CD4-positive, alpha-beta memory T cell (primary cell): ENCODE measurements at regions of chr3 and their contacts with region 1.

Region 1: GRCh38 chr3:33773637-33774036 is 24.8 kb upstream of the PDCD6IP start:
- DNase-seq: no peak
- H3K4me3 ChIP-seq: no peak overlapping the region
- H3K4me3 Mint-ChIP-seq: no peak overlapping the region
- H3K27ac ChIP-seq: no peak overlapping the region
- H3K27ac Mint-ChIP-seq: no peak overlapping the region
- H3K4me1 ChIP-seq: no peaks in the 10 kb centered on the region
- H3K4me1 Mint-ChIP-seq: no peaks in the 10 kb centered on the region
- H3K27me3 ChIP-seq: no peaks in the 10 kb centered on the region
- H3K27me3 Mint-ChIP-seq: peaks cover 0 to 1% of the 10 kb centered on the region in 2 donors

Region 2: DNA sequence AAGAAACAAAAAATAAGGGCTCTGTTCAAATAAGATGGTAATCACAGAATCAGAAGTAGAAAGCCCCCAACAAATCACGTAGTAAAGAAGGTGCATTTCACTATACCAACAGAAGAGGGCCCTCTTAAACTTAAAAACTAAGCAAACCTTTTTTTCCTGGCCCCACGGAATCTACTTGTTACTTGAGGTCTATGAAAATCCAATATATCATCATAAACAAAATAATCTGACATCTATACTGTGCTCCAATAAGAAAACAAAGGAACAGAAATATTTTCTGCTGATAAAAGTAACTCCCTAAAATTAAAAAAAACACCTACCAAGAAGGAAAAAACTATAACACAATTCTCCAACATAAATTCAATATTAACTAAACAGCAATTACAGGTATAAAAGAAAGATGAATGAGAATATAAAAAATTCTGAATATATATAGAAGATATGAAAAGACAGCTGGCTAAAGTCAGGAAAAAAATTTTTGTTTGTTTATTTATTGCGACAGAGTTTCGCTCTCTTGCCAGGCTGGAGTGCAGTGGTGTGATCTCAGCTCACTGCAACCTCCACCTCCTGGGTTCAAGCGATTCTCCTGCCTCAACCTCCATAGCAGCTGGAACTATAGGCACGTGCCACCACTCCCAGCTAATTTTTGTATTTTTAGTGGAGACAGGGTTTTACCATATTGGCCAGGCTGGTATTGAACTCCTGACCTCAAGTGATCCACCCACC is 137.3 kb before region 1 on chr3:
- CTCF ChIA-PET with region 1: interaction called, 6 read pairs
- POLR2A ChIA-PET with region 1: no interaction called
- intact Hi-C with region 1: loop called (anchors 1 kb)
- DNase-seq: peak; percentile 9 to 31 (median 22)
- H3K4me3 ChIP-seq: no peak overlapping the region
- H3K4me3 Mint-ChIP-seq: no peak overlapping the region
- H3K27ac ChIP-seq: no peak overlapping the region
- H3K27ac Mint-ChIP-seq: no peak overlapping the region
- H3K4me1 ChIP-seq: no peaks in the 10 kb centered on the region
- H3K4me1 Mint-ChIP-seq: no peaks in the 10 kb centered on the region
- H3K27me3 ChIP-seq: no peaks in the 10 kb centered on the region
- H3K27me3 Mint-ChIP-seq: no peaks in the 10 kb centered on the region

Region 3: GRCh38 chr3:33758864-33759263 is 14.8 kb before region 1 on chr3:
- CTCF ChIA-PET with region 1: interaction called, 10 read pairs
- POLR2A ChIA-PET with region 1: no interaction called
- intact Hi-C with region 1: no loop called
- DNase-seq: no peak
- H3K4me3 ChIP-seq: no peak overlapping the region
- H3K4me3 Mint-ChIP-seq: no peak overlapping the region
- H3K27ac ChIP-seq: no peak overlapping the region
- H3K27ac Mint-ChIP-seq: no peak overlapping the region
- H3K4me1 ChIP-seq: no peaks in the 10 kb centered on the region
- H3K4me1 Mint-ChIP-seq: no peaks in the 10 kb centered on the region
- H3K27me3 ChIP-seq: no peaks in the 10 kb centered on the region
- H3K27me3 Mint-ChIP-seq: peaks cover 0 to 2% of the 10 kb centered on the region in 2 donors